ENCODE measurements at regions of chr12 and their contacts with region 1.

Region 1: GRCh38 chr12:21657326-21658077 is at the start of gene LDHB:
- DNase-seq: peak; percentile 97
- ATAC-seq: peak; percentile 98
- H3K4me3 Mint-ChIP-seq: peak within 1 kb of the TSS; percentile 97
- H3K27ac Mint-ChIP-seq: peak within 1 kb of the TSS; percentile 99
- H3K4me1 Mint-ChIP-seq: peaks cover 37% of the 10 kb centered on the region
- H3K27me3 Mint-ChIP-seq: no peaks in the 10 kb centered on the region
- CTCF ChIP-seq: no peak
- total RNA-seq, gene LDHB: 1,504 to 1,616 TPM (median 1,559 TPM) in 3 replicates

Region 2: GRCh38 chr12:21501379-21501956 is 156.0 kb before region 1 on chr12 and contains the starts of genes GOLT1B and RECQL:
- CTCF ChIA-PET with region 1: interaction called, 4 read pairs
- POLR2A ChIA-PET with region 1: interaction called, 11 read pairs
- DNase-seq: peak; percentile 88
- ATAC-seq: peak; percentile 92
- H3K4me3 Mint-ChIP-seq: no peak within 1 kb of the TSS
- H3K27ac Mint-ChIP-seq: no peak within 1 kb of the TSS
- H3K4me1 Mint-ChIP-seq: peaks cover 14% of the 10 kb centered on the region
- H3K27me3 Mint-ChIP-seq: no peaks in the 10 kb centered on the region
- CTCF ChIP-seq: no peak
- total RNA-seq, gene GOLT1B: 36.1 to 39.7 TPM (median 37.1 TPM) in 3 replicates
- total RNA-seq, gene RECQL: 34.1 to 40.3 TPM (median 35.3 TPM) in 3 replicates

Region 3: DNA sequence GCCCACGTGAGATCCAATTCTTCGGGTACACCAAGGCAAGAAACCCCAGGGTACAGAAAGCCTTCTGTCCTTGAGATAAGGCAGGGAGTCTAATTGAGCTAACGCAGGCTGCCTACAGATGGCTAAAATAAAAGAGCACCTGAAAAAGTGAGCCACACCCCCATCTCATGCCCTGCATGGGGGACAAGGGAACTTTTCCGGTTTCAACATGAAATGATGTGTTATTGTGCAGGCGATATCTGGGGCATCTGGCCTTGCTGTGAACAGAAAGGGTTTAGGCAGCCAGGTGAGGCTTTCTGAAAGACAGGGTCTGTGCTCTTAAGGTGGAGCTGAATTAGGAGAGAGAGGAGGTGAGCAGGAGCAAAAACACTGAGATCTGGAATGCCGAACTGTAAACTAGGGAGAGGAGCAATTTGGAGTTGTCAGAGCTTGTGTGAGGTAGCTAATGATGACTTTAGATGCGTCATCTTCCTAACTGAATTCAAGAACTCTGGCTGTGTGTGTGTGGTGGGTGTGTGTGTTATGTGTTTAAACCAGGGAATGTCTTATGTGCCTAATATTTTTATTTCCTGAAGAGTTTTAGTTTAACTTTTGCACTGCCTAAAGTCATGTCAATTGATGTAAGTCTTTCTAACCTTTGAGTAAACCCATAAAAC is 20.2 kb after region 1 on chr12:
- CTCF ChIA-PET with region 1: interaction called, 12 read pairs
- POLR2A ChIA-PET with region 1: interaction called, 4 read pairs
- DNase-seq: no peak
- ATAC-seq: no peak
- H3K4me3 Mint-ChIP-seq: no peak overlapping the region
- H3K27ac Mint-ChIP-seq: no peak overlapping the region
- H3K4me1 Mint-ChIP-seq: no peaks in the 10 kb centered on the region
- H3K27me3 Mint-ChIP-seq: no peaks in the 10 kb centered on the region
- CTCF ChIP-seq: no peak

Region 4: GRCh38 chr12:22046090-22046967 is 388.8 kb after region 1 on chr12 and contains the start of gene CMAS:
- CTCF ChIA-PET with region 1: no interaction called
- POLR2A ChIA-PET with region 1: interaction called, 11 read pairs
- DNase-seq: peak; percentile 86
- ATAC-seq: peak; percentile 83
- H3K4me3 Mint-ChIP-seq: peak within 1 kb of the TSS; percentile 94
- H3K27ac Mint-ChIP-seq: peak within 1 kb of the TSS; percentile 82
- H3K4me1 Mint-ChIP-seq: peaks cover 43% of the 10 kb centered on the region
- H3K27me3 Mint-ChIP-seq: no peaks in the 10 kb centered on the region
- CTCF ChIP-seq: no peak
- total RNA-seq, gene CMAS: 68.6 to 71.6 TPM (median 69.0 TPM) in 3 replicates